ENCODE measurements at regions of chr4 and their contacts with region 1.

Region 1: GRCh38 chr4:17562160-17562559 is 14.8 kb upstream of the LAP3 start:
- DNase-seq: peak; percentile 46
- ATAC-seq: peak; percentile 16
- H3K4me3 ChIP-seq: no peak overlapping the region
- H3K27ac ChIP-seq: no peak overlapping the region
- H3K4me1 ChIP-seq: peaks cover 61% of the 10 kb centered on the region
- H3K27me3 ChIP-seq: no peaks in the 10 kb centered on the region
- CTCF ChIP-seq: peak; percentile 46
- EP300 ChIP-seq: no peak
- POLR2A ChIP-seq: no peak
- RAD21 ChIP-seq: peak; percentile 59

Region 2: GRCh38 chr4:17502756-17503155 is 59.4 kb before region 1 on chr4:
- CTCF ChIA-PET with region 1: no interaction called
- POLR2A ChIA-PET with region 1: no interaction called
- in situ Hi-C with region 1: no loop called
- intact Hi-C with region 1: no loop called
- DNase-seq: no peak
- ATAC-seq: no peak
- H3K4me3 ChIP-seq: no peak overlapping the region
- H3K27ac ChIP-seq: no peak overlapping the region
- H3K4me1 ChIP-seq: peaks cover 18% of the 10 kb centered on the region
- H3K27me3 ChIP-seq: no peaks in the 10 kb centered on the region
- CTCF ChIP-seq: no peak
- EP300 ChIP-seq: no peak
- POLR2A ChIP-seq: no peak
- RAD21 ChIP-seq: no peak

Region 3: DNA sequence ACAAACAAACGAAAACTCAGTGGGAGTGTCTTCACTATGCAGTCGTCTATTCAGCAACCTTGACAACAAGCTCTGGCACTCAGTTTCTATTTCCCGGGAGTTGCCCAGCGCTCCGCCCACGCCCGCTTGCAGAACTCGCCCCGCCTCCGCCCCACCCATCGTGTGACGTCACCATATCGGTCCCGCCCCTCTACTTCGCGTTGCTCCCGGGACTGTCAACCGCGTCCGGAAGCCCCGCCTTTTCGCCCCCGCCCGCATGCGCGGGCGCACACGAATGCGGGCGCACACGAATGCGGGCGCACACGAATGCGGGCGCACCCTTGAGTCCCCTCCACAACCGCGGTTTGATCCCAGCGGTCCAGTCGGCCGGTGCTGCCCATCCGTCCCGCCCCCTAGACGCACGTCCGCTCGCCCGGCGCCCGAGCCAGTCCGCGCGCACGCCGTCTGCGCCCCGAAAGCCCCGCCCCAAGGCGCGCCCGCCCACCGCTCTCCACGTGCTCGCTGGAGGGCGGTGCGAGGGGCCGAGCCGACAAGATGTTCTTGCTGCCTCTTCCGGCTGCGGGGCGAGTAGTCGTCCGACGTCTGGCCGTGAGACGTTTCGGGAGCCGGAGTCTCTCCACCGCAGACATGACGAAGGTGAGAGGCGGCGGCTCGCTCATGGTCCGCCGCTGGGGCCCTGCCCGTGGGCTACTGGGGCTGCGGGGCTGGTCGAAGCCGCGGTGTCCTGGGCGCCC is 14.9 kb after region 1 on chr4 and contains the start of gene LAP3:
- CTCF ChIA-PET with region 1: no interaction called
- POLR2A ChIA-PET with region 1: interaction called, 49 read pairs
- in situ Hi-C with region 1: no loop called
- intact Hi-C with region 1: loop called (anchors 1 kb)
- DNase-seq: peak; percentile 90
- ATAC-seq: peak; percentile 94
- H3K4me3 ChIP-seq: peak within 1 kb of the TSS; percentile 87 to 91 (median 91)
- H3K27ac ChIP-seq: peak within 1 kb of the TSS; percentile 75
- H3K4me1 ChIP-seq: peaks cover 63% of the 10 kb centered on the region
- H3K27me3 ChIP-seq: no peaks in the 10 kb centered on the region; a peak in 1 of 5 replicates
- CTCF ChIP-seq: peak; percentile 18; the same call in 1 of the 2 replicates
- EP300 ChIP-seq: no peak
- POLR2A ChIP-seq: peak; percentile 89 to 92
- RAD21 ChIP-seq: peak; percentile 43
- total RNA-seq, gene LAP3: 125 and 177 TPM in 2 replicates

Region 4: GRCh38 chr4:17614416-17615299 is 52.5 kb after region 1 on chr4 and contains the start of gene MED28:
- CTCF ChIA-PET with region 1: no interaction called
- POLR2A ChIA-PET with region 1: interaction called, 11 read pairs
- in situ Hi-C with region 1: no loop called
- intact Hi-C with region 1: loop called (anchors 2 kb)
- DNase-seq: peak; percentile 93
- ATAC-seq: peak; percentile 84
- H3K4me3 ChIP-seq: peak within 1 kb of the TSS; percentile 92 to 98 (median 93)
- H3K27ac ChIP-seq: peak within 1 kb of the TSS; percentile 82
- H3K4me1 ChIP-seq: peaks cover 39% of the 10 kb centered on the region
- H3K27me3 ChIP-seq: no peaks in the 10 kb centered on the region; a peak in 1 of 5 replicates
- CTCF ChIP-seq: peak; percentile 25
- EP300 ChIP-seq: no peak
- POLR2A ChIP-seq: peak; percentile 80 to 84; a peak in 3 of 4 replicates
- RAD21 ChIP-seq: no peak
- total RNA-seq, gene MED28: 65.7 and 96.5 TPM in 2 replicates

Region 5: DNA sequence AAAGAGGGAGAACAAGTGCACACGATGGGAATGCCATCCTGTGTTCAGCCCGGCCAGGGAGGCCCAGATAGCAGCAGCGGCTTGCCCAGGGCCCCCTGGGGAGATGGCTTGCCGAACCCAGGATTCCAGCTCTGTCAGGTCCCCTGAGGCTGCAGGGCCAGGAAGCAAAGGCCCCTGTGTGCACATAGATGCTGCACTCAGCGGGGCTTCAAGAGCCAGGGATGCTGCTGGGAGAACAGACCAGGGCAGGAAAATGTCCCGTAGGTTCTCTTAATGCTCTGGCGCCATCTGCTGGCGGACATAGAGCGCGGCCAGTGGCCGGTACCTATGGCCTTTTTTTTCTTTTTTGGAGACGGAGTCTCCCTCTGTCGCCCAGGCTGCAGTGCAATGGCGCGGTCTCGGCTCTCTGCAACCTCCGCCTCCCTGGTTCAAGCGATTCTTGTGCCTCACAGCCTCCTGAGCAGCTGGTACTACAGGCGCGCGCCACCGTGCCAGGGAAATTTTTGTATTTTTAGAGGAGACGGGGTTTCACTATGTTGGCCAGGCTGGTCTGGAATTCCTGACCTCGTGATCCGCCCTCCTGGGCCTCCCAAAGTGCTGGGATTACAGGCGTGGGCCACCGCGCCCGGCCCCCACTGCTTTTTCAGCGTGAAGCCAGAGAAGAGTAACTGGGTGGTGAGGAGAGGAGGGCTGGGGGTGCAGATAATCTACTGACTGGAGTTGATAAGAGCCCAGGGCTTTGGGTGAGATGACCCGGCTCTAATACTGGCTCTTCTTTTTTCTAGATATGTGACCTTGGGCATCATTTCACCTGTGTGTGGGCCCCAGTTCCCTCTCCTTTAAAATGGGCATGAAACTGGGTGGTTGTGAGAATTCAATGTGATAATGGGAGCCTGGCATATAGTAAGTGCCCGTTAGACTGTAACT is 74.8 kb after region 1 on chr4:
- CTCF ChIA-PET with region 1: no interaction called
- POLR2A ChIA-PET with region 1: no interaction called
- in situ Hi-C with region 1: loop called (anchors 5 kb)
- intact Hi-C with region 1: no loop called
- DNase-seq: peak; percentile 64
- ATAC-seq: peak; percentile 94
- H3K4me3 ChIP-seq: no peak overlapping the region
- H3K27ac ChIP-seq: no peak overlapping the region
- H3K4me1 ChIP-seq: peaks cover 9% of the 10 kb centered on the region; the same call in 1 of the 2 replicates
- H3K27me3 ChIP-seq: no peaks in the 10 kb centered on the region
- CTCF ChIP-seq: peak; percentile 89
- EP300 ChIP-seq: no peak
- POLR2A ChIP-seq: no peak
- RAD21 ChIP-seq: peak; percentile 91

Region 6: DNA sequence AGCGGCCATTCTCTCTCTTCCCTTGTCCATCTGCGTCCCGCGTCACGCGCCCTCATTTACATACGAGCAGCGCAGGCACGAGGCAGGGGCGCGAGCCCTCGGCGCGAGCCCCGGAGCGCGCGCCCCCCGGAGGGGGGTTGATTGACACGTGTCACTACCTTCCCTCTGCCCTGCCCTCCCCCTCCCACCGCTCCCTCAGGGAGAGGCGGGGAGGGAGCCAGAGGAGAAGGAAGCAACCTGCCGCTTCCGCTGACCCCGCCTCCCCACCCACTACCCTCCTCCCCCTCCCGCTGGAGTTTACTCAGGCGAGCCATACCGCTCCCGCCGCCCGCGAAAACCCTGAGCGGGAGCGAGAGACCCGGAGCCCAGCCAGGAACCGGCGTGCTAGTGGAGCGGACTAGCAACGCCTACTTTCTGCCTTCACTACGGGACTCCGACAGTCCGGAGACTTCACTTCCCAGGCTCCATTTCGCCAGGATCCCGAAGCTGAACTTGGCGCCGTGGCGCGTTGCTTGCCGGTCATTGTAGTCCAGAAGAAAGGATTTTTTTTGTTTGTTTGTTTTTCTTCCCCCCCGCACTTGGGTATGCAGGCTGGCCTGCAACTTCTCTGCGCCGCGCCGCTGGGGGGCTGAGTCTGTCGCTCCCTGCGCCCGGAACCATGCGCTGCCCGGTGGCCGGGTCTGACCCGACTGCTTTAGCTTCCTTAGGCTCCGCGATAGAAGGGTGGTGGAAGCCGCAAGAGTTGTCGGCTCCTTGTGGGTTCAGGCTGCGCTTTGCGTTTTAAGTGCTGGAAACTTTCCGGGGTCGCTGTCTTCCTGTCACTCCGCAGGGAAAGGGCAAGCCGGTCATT is 459.8 kb after region 1 on chr4 and contains the start of gene LCORL:
- CTCF ChIA-PET with region 1: no interaction called
- POLR2A ChIA-PET with region 1: no interaction called
- in situ Hi-C with region 1: loop called (anchors 25 kb)
- intact Hi-C with region 1: no loop called
- DNase-seq: peak; percentile 96
- ATAC-seq: peak; percentile 90
- H3K4me3 ChIP-seq: peak within 1 kb of the TSS; percentile 89 to 97 (median 93)
- H3K27ac ChIP-seq: peak within 1 kb of the TSS; percentile 96
- H3K4me1 ChIP-seq: peaks cover 21% of the 10 kb centered on the region
- H3K27me3 ChIP-seq: peaks cover 0 to 15% of the 10 kb centered on the region in 2 experiments; a peak in 1 of 5 replicates
- CTCF ChIP-seq: peak; percentile 66
- EP300 ChIP-seq: no peak
- POLR2A ChIP-seq: peak; percentile 19 to 57; a peak in 3 of 4 replicates
- RAD21 ChIP-seq: no peak
- total RNA-seq, gene LCORL: 14.5 and 16.5 TPM in 2 replicates